ENCODE measurements at regions of chr5 and their contacts with region 1.

Region 1: GRCh38 chr5:10283927-10284635 is 23.6 kb downstream of the CMBL start:
- DNase-seq: peak; percentile 87
- H3K4me3 ChIP-seq: peak overlapping the region; percentile 30
- H3K27ac ChIP-seq: no peak overlapping the region
- H3K4me1 ChIP-seq: peaks cover 22% of the 10 kb centered on the region
- CTCF ChIP-seq: peak; percentile 94

Region 2: GRCh38 chr5:10364186-10364683 is 80.2 kb after region 1 on chr5:
- CTCF ChIA-PET with region 1: interaction called, 6 read pairs
- POLR2A ChIA-PET with region 1: interaction called, 8 read pairs
- intact Hi-C with region 1: loop called (anchors 1 kb)
- DNase-seq: peak; percentile 37
- H3K4me3 ChIP-seq: no peak overlapping the region
- H3K27ac ChIP-seq: no peak overlapping the region
- H3K4me1 ChIP-seq: peaks cover 20% of the 10 kb centered on the region
- CTCF ChIP-seq: peak; percentile 78

Region 3: DNA sequence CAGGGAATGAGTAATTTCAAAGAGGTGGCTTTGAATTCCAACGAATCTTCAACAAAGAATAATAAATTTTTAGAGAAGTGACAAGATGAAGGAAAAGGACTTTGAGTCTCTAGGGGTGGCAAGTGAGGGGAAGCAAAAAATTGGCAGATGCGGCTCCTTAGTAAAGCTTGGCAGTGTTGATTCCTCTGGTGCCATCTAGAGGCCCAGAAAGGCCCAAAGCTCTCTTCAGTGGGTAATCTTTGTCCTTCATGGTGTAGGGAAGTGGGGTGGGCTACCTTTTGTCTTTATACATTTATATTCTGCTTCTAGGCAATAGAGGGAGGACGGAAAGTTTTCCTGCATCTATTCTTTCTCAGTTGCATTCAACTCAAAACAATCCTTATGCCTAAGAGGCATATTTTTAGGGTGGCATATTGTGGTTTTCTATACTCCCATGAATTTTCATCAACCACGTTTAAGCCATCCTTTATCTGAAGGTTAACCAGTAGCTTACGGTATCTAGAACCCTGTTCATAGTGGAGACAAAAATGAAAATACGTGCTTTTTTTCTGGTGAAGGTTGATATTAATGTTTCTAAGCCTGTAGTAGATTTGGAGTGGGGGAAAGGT is 140.1 kb after region 1 on chr5:
- CTCF ChIA-PET with region 1: interaction called, 4 read pairs
- POLR2A ChIA-PET with region 1: no interaction called
- intact Hi-C with region 1: loop called (anchors 1 kb)
- DNase-seq: peak; percentile 64
- H3K4me3 ChIP-seq: no peak overlapping the region
- H3K27ac ChIP-seq: no peak overlapping the region
- H3K4me1 ChIP-seq: peaks cover 8% of the 10 kb centered on the region
- CTCF ChIP-seq: peak; percentile 80

Region 4: GRCh38 chr5:10445352-10445751 is 161.3 kb after region 1 on chr5:
- CTCF ChIA-PET with region 1: no interaction called
- POLR2A ChIA-PET with region 1: no interaction called
- intact Hi-C with region 1: loop called (anchors 5 kb)
- DNase-seq: peak; percentile 11
- H3K4me3 ChIP-seq: no peak overlapping the region
- H3K27ac ChIP-seq: no peak overlapping the region
- H3K4me1 ChIP-seq: peaks cover 16% of the 10 kb centered on the region
- CTCF ChIP-seq: no peak

Region 5: GRCh38 chr5:10563945-10564837 is 280.1 kb after region 1 on chr5 and contains the start of gene ANKRD33B:
- CTCF ChIA-PET with region 1: no interaction called
- POLR2A ChIA-PET with region 1: no interaction called
- intact Hi-C with region 1: loop called (anchors 10 kb)
- DNase-seq: peak; percentile 91
- H3K4me3 ChIP-seq: peak within 1 kb of the TSS; percentile 78
- H3K27ac ChIP-seq: peak within 1 kb of the TSS; percentile 20
- H3K4me1 ChIP-seq: peaks cover 50% of the 10 kb centered on the region
- CTCF ChIP-seq: no peak
- total RNA-seq, gene ANKRD33B: 5.6 TPM in 2 replicates